Ascending aorta (tissue), 2 donors: ENCODE measurements at regions of chr12 and their contacts with region 1.

Region 1: GRCh38 chr12:6470375-6471163 is at the start of gene VAMP1:
- DNase-seq: peak; percentile 90 to 99
- H3K4me3 ChIP-seq: peak within 1 kb of the TSS; percentile 79 to 91
- H3K27ac ChIP-seq: peak within 1 kb of the TSS; percentile 68 to 86
- H3K4me1 ChIP-seq: peaks cover 0 to 20% of the 10 kb centered on the region in 2 donors
- H3K27me3 ChIP-seq: no peaks in the 10 kb centered on the region
- CTCF ChIP-seq: peak in 1 of 3 experiments; percentile 11
- total RNA-seq, gene VAMP1: 17.1 TPM

Region 2: DNA sequence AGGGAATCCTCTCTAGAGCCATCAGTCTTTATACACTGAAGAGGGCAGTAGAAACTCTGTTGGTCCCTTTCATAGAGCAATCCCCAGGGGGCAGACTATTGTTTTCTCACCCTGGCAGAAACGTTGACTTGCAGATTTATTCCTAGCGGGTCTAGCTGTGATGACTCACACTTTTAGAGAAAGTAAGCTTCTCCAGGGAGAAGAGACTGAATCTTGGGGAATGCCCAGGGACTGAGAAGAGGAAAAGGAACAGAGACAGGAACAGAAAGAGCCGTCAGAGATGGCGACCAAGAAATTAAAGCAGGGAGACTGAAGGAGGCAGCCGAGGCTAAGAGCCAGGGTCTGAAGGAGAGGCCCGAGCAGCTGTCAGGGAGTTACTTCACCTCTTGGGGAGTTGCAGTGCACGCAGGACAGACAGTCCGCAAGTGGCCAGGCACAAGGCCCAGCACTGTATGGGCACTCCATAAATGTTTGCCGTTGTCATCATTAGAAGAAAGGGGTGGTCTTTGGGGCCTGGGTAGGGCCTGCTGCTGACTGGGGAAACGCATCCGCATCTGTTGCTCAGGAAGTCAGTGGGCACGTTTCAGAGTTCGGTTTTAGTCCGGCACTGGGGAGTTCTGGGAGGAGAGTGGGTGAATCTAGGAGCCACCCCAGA is 147.1 kb before region 1 on chr12:
- intact Hi-C with region 1: loop called (anchors 2 kb)
- DNase-seq: peak in 1 of 2 donors; percentile 86
- H3K4me3 ChIP-seq: peak overlapping the region in 1 of 2 donors; percentile 44
- H3K27ac ChIP-seq: peak overlapping the region; percentile 75 to 81
- H3K4me1 ChIP-seq: peaks cover 5 to 30% of the 10 kb centered on the region in 2 donors
- H3K27me3 ChIP-seq: no peaks in the 10 kb centered on the region
- CTCF ChIP-seq: peak; percentile 40 to 56 (median 56)

Region 3: DNA sequence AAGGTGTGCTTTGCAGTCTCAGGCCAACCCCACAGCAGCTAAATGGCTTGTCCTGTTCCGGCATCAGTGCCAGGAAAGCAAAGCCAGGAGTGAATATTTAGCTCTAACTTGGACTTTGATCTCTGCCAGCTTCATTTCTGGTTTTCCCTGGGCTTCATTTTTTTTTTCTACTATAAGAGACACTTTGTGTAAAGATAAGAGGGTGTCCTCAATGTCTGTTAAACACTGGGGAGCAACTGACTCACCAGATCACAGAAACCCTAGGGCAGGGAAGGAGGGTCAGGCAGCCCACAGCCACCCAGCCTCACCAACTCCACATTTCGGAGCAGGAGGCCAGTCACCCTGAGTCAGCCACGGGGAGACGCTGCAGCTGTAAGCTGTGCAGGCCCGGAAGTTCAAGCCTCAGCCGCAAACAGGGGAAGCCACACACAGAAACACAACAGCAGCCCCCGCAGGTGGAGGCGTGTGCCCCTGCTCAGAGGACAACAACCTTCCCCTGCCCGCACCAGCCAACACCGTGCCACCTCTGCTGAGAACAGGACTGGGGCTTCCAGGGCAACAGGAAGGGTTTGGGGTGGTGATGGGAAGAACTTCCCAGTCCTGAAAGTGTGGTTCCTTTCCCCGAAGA is 135.0 kb before region 1 on chr12:
- intact Hi-C with region 1: loop called (anchors 5 kb)
- DNase-seq: peak; percentile 65 to 94
- H3K4me3 ChIP-seq: peak overlapping the region; percentile 90 to 93
- H3K27ac ChIP-seq: peak overlapping the region; percentile 97 to 98
- H3K4me1 ChIP-seq: peaks cover 24 to 52% of the 10 kb centered on the region in 2 donors
- H3K27me3 ChIP-seq: no peaks in the 10 kb centered on the region
- CTCF ChIP-seq: peak; percentile 43 to 71 (median 69)

Region 4: GRCh38 chr12:6423267-6424007 is 47.1 kb before region 1 on chr12:
- intact Hi-C with region 1: loop called (anchors 1 kb)
- DNase-seq: peak; percentile 46 to 92
- H3K4me3 ChIP-seq: no peak overlapping the region
- H3K27ac ChIP-seq: no peak overlapping the region
- H3K4me1 ChIP-seq: peaks cover 0 to 4% of the 10 kb centered on the region in 2 donors
- H3K27me3 ChIP-seq: no peaks in the 10 kb centered on the region
- CTCF ChIP-seq: peak; percentile 85 to 92 (median 90)

Region 5: DNA sequence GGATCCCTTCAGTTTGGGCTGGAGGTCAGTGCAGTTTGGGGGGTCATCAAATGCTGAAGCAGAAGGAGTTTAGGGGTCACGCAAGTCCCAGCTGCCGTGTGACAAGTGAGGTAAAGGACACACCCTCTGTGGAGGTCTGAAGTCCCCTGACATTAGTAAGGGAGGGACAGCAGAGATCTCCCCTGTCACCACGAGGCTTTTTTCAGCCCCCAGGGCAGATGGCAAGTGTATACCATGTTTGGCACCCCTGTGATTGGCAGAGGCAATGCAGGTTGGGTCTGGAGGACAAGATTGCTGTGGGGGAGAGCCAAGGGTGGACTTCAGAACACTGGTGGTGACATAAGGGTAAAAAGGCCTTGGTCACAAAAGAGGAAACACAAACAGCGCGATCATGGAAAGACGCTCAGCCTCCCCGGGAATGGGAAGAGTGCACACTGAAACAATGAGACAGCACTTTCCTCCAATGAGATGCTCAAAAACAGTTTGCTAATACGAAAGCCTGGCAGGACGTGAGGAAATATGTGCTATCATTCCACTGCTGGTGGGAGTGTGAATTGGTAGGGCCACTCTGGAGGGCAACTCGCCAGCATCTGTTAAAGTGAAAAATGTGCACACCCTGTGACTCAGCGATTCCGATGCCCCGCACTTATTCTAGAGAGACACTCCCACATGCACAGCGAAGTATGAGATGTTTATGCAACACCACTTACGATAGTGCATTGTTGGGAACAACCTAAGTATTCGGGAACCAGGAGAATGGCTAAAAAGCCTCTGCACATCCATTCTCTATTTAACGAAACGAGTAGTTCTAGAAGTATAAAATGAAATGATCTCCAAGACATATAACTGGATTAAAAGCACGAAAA is 40.2 kb before region 1 on chr12:
- intact Hi-C with region 1: loop called (anchors 2 kb)
- DNase-seq: peak; percentile 46 to 97
- H3K4me3 ChIP-seq: peak overlapping the region; percentile 28 to 55
- H3K27ac ChIP-seq: peak overlapping the region; percentile 82 to 91
- H3K4me1 ChIP-seq: peaks cover 0 to 15% of the 10 kb centered on the region in 2 donors
- H3K27me3 ChIP-seq: no peaks in the 10 kb centered on the region
- CTCF ChIP-seq: no peak

Region 6: GRCh38 chr12:6493497-6494257 is 23.1 kb after region 1 on chr12 and contains the start of gene NCAPD2:
- intact Hi-C with region 1: loop called (anchors 1 kb)
- DNase-seq: peak; percentile 89 to 98
- H3K4me3 ChIP-seq: peak within 1 kb of the TSS; percentile 67 to 77
- H3K27ac ChIP-seq: peak within 1 kb of the TSS; percentile 79 to 98
- H3K4me1 ChIP-seq: peaks cover 8 to 18% of the 10 kb centered on the region in 2 donors
- H3K27me3 ChIP-seq: no peaks in the 10 kb centered on the region
- CTCF ChIP-seq: peak in 2 of 3 experiments; percentile 31 to 73
- total RNA-seq, gene NCAPD2: 11.7 TPM

Region 7: DNA sequence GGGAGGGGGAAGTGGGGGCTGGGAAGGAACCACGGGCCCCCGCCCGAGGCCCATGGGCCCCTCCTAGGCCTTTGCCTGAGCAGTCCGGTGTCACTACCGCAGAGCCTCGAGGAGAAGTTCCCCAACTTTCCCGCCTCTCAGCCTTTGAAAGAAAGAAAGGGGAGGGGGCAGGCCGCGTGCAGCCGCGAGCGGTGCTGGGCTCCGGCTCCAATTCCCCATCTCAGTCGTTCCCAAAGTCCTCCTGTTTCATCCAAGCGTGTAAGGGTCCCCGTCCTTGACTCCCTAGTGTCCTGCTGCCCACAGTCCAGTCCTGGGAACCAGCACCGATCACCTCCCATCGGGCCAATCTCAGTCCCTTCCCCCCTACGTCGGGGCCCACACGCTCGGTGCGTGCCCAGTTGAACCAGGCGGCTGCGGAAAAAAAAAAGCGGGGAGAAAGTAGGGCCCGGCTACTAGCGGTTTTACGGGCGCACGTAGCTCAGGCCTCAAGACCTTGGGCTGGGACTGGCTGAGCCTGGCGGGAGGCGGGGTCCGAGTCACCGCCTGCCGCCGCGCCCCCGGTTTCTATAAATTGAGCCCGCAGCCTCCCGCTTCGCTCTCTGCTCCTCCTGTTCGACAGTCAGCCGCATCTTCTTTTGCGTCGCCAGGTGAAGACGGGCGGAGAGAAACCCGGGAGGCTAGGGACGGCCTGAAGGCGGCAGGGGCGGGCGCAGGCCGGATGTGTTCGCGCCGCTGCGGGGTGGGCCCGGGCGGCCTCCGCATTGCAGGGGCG is 63.5 kb after region 1 on chr12 and contains the start of gene GAPDH:
- intact Hi-C with region 1: loop called (anchors 1 kb)
- DNase-seq: peak; percentile 52 to 94
- H3K4me3 ChIP-seq: peak within 1 kb of the TSS; percentile 79 to 98
- H3K27ac ChIP-seq: peak within 1 kb of the TSS; percentile 98 to 99
- H3K4me1 ChIP-seq: peaks cover 19 to 30% of the 10 kb centered on the region in 2 donors
- H3K27me3 ChIP-seq: no peaks in the 10 kb centered on the region
- CTCF ChIP-seq: no peak
- total RNA-seq, gene GAPDH: 3,445 TPM